Cardiac septum (tissue), 1 donor: ENCODE measurements at regions of chr3 and their contacts with region 1.

Region 1: DNA sequence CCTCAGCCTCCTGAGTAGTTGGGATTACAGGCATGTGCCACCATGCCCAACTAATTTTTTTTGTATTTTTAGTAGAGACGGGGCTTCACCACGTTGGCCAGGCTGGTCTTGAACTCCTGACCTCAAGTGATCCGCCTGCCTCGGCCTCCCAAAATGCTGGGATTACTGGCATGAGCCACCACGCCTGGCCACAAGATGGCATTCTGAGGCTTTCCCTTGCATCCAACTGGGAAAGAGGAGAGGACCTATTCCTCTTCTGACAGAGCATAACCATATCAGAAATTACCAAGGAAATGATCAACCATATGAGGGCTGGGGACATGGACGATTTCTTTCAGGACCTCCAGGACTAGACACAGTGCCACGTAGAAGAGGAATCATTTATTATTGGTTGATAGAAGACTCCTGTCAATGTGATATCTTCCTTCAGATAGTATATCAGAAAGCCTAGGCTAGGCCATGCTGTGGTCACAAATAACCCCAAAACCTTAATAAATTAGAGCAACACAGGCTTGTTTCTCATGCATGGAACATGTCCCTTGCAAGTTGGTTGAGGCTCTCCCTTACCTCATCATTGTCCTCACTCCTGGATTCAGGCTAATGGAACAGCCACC is 372.3 kb upstream of the IL12A start:
- DNase-seq: no peak

Region 2: DNA sequence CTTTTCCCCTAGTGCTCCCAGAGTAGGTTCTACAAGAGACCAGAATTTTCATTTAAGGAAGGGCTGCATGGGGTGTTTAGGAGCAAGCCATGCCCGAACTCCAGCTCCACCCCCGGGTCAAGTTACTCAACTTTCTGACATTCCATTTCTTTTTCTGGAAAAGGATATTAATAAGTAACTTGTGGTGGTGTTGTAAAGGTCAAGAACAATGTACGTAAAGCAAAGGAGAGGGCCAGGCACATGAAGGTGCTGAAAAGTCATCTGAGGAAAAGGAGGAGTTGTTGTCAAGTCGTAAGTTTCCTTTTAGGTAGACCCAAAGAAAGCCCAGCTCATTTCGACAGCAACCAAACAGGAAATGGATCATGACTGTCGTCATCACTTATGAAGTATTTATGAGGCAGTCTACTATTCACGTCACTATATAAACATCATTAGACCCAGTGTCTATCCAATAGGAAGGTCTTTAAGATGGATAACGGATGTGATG is 52.7 kb after region 1 on chr3:
- intact Hi-C with region 1: loop called (anchors 5 kb)
- DNase-seq: no peak

Region 3: DNA sequence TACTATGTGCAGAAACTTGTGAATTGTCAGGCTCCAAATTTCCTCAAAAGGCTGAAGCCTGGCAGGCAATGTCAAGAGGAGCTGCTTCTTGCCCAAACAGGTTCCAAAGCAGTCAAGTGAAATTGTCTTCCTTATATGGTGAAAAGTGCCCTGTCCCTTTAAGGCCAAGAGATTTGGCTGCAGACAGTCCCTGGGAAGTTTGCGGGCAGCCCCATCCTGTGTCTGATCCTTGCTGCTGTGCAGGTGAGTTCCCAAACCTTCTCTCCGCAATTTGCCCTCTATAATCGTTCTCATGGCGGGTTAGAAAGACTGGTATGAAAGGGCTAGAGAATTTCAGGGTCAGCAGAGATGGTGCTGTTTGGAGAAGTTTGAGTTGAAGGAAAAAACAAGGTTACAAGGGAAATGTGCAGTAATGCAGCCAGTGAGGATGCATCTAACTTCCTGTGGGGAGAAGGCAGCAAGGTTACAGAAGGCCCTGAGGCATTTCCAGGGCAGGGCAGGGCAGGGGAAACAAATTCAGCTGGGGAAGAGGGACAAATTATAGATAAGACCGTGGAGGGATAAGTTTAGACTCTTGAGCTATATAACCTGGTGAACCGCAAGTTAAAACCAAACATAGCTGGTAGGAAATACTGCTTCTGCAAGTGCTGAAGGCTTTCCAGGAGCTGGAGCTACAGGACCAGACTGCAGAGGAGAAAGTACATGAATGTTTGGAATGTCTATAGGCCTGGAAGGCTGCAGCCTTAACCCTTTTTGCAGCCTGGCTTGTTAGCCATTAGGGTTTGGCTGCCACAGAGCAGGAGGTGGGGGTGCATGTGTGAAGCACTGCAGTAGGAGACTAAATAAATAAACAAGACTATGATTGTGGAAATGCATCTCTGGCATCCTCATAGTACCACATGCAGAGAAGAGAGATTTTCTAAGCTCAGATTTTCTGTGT is 116.1 kb after region 1 on chr3:
- intact Hi-C with region 1: loop called (anchors 5 kb)
- DNase-seq: no peak

Region 4: DNA sequence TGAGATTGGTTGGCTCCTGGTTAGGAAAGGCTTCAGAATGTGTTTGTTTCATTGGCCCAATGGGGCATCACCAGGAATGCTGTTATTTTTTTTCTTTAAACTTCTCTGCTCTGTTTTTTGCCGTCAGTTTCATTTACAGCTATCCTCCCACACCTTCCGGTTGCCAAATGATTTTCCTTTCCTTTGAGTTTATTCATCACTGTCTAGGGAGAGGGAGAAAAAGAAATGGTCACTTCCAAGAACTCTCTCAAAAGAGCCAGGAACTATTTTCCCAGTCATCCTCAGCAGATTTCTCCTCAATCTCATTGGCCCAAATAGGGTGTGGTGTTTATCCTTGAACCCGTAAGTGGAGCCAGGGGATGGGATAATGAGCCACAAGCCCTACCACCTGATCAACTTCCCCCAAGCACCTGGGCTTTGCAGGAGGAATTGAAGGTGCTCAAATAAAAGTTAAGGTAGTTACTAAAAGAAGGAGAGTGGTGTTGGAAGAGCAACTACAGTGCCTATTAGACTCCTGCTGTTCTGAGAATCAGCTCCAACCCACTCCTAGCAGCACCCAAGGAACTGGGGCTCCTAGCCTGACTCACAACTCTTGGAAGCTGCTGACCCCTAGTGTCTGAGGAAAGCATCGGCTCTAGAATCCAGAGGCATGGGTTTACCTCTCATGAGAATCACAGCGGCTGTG is 188.5 kb after region 1 on chr3:
- intact Hi-C with region 1: loop called (anchors 1 kb)
- DNase-seq: no peak

Region 5: GRCh38 chr3:160003520-160004128 is 387.3 kb after region 1 on chr3:
- intact Hi-C with region 1: loop called (anchors 2 kb)
- DNase-seq: no peak